Cardiac septum (tissue), 1 donor: ENCODE measurements at regions of chr19 and their contacts with region 1.

Region 1: GRCh38 chr19:44207126-44207803 is 5.1 kb upstream of the ZNF227 start:
- DNase-seq: peak; percentile 94

Region 2: GRCh38 chr19:43983912-43984686 is 223.2 kb before region 1 on chr19 and contains the start of gene ZNF155:
- intact Hi-C with region 1: no loop called
- DNase-seq: peak; percentile 96
- total RNA-seq, gene ZNF155: 6.4 TPM

Region 3: DNA sequence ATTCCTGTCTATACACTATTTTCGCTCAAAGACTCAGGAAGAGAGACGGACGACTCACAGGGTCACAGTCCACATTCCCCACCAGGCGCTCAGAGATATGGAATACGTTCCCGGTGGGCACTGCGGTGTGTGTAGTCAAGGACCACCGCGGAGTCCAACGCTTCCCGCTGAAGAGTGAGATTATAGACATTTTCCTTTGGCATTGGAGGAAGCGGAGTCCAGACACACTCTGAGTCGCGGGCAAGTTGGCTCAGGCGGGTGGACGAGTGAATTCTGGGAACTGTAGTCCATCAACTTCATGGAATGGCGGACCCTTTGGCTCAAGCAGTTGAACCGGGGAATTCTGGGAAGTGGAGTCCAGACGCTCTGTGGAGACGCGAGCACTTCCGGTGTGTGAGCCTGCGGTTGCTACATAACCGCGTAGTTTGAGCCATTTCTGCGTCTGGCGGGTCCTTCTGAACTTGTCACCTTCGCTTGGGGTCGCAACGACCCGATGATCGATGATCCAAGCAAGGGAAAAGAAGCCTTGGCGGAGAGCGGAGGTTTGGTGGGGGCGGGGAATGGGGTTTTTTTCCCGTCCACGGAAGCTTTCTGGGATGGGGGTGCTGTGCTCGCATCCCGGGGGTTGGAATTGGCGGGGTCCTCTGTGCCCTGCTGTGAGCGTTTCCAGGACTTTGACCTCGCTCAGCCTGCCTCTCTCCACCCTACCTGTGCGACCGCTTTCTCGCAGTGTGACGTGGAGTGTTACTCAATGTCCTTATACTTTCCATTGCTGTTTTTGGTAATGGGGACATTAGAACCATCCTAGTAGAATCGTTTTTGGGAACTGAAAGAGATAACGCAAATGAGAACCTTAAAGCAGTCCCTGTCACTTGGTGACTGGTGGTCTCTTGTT is 204.5 kb before region 1 on chr19 and contains the start of gene ZNF230:
- intact Hi-C with region 1: loop called (anchors 10 kb)
- DNase-seq: peak; percentile 95
- total RNA-seq, gene ZNF230: 2.3 TPM

Region 4: GRCh38 chr19:44051654-44052402 is 155.4 kb before region 1 on chr19 and contains the start of gene ZNF223:
- intact Hi-C with region 1: loop called (anchors 1 kb)
- DNase-seq: peak; percentile 97
- total RNA-seq, gene ZNF223: 2.2 TPM

Region 5: GRCh38 chr19:44093931-44094765 is 113.1 kb before region 1 on chr19 and contains the start of gene ZNF224:
- intact Hi-C with region 1: loop called (anchors 5 kb)
- DNase-seq: peak; percentile 97
- total RNA-seq, gene ZNF224: 12.9 TPM

Region 6: GRCh38 chr19:44164673-44165512 is 42.4 kb before region 1 on chr19 and contains the start of gene ZNF226:
- intact Hi-C with region 1: loop called (anchors 1 kb)
- DNase-seq: peak; percentile 95
- total RNA-seq, gene ZNF226: 25.6 TPM

Region 7: DNA sequence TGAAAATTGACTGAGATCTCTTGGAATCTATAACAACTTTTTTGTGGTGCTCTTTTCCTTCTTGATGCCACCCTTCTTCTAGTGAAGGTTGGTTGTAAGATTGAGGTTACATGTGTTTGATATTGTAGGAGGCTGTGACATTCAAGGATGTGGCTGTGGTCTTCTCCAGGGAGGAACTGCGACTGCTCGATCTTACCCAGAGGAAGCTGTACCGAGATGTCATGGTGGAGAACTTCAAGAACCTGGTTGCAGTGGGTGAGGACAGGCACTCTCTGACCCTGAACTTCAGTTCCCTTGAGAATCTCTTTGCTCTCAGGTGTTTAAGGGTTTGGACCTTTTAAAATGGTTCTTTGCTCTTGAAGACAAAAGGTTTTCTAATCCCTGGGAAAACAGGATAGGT is 21.1 kb after region 1 on chr19:
- intact Hi-C with region 1: no loop called
- DNase-seq: no peak

Region 8: DNA sequence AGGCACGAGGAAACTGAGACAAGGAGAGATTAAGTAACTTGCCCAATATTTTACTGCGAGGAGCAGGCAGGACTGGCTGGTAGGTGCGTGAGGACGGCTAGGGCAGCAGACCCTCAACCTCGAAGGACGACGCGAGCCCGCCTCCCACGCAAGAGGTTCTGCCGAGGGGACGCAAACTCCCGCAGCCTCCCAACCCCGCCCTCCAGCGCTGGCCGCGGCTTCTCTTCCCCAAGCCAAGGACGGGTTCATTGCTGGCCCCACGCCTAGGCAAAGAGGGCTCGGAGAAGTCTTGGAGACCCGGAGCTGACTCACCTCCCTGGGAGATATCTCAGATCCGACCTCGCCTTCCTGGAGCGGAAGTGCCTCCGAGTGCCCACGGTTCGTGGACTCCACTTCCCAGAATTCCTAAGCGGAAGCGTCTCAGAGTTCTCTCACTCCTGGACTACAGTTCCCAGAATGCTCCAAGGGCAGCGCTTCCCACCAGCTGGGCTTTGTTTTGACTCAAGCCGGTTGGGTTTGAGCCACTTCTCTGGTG is 97.5 kb after region 1 on chr19 and contains the start of gene ZNF235:
- intact Hi-C with region 1: no loop called
- DNase-seq: peak; percentile 95
- total RNA-seq, gene ZNF235: 5.2 TPM

Region 9: GRCh38 chr19:44356383-44357111 is 149.3 kb after region 1 on chr19 and contains the start of gene ZNF112:
- intact Hi-C with region 1: loop called (anchors 2 kb)
- DNase-seq: peak; percentile 90
- total RNA-seq, gene ZNF112: 3.8 TPM

Region 10: DNA sequence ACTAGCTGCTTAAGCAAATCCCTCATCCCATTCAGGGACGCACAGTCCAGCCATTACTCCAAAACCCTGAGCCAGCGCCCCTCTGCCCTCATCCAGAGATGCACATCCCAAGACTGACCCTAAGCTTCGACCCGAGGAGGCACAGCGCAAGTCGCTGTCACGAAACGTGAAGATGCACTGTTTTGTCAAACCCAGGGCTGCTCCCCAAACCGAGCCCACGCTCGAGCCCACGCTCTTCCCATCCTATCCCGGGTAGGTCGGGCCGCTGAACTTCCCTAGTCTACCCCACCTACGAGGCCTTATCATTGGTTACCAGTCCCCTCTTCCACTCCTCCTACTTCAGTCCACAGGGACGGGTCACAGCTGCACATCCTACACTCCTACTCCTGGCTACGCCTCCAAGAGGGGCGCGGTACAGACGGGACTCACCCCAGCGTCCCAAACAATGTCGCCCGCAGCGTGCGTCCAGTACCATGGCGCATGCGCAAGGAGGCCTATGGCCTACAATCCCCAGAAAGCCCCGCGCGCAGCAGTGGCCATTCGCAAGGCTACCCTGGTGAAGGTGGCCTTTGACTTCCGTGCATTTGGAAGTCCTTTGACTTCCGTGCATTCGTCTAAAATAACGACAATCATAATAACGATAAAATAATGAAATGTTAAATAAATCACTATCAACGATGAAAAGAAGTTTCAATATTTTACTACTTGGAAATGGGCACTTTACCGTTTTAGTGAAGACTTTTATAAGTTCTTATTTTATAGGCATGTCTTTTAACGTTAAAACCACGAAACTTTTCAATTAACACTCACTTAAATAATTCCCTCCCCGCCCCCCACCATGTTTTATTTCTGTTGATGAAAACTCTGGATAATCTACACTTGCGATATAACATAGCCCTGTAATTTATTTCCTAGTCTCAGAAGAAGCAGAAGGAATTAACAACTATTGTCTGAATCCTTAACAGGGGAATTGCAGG is 194.2 kb after region 1 on chr19 and contains the start of gene ZNF285:
- intact Hi-C with region 1: loop called (anchors 5 kb)
- DNase-seq: peak; percentile 95
- total RNA-seq, gene ZNF285: 3.0 TPM

Region 11: GRCh38 chr19:44447916-44448674 is 240.8 kb after region 1 on chr19 and contains the start of gene ZNF229:
- intact Hi-C with region 1: no loop called
- DNase-seq: peak; percentile 94
- total RNA-seq, gene ZNF229: 7.1 TPM